Mammary epithelial cell (primary cell): ENCODE measurements at regions of chr12 and their contacts with region 1.

Region 1: GRCh38 chr12:76206039-76206676 is 121.7 kb upstream of the NAP1L1 start:
- DNase-seq: no peak
- H3K4me3 ChIP-seq: no peak overlapping the region
- H3K27ac ChIP-seq: no peak overlapping the region
- H3K4me1 ChIP-seq: no peaks in the 10 kb centered on the region
- H3K27me3 ChIP-seq: no peaks in the 10 kb centered on the region
- CTCF ChIP-seq: no peak

Region 2: DNA sequence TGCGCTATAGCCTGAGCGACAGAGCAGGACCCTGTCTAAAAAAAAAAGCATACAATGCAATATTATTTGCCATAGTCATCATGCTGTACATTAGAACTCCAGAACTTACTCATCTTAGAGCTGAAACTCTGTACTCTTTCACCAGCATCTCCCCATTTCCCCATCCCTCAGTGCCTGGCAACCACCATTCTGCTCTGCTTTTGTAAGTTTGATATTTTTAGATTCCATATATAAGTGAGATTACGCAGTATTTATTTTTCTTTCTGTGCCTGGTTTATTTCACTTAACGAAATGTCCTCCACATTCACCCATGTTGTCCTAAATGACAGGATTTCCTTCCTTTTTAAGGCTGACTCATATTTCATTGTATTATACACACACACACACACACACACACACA is 20.2 kb after region 1 on chr12:
- CTCF ChIA-PET with region 1: interaction called, 19 read pairs
- dilution Hi-C with region 1: no loop called
- in situ Hi-C with region 1: no loop called
- intact Hi-C with region 1: no loop called
- DNase-seq: no peak
- H3K4me3 ChIP-seq: no peak overlapping the region
- H3K27ac ChIP-seq: no peak overlapping the region
- H3K4me1 ChIP-seq: no peaks in the 10 kb centered on the region
- H3K27me3 ChIP-seq: no peaks in the 10 kb centered on the region
- CTCF ChIP-seq: no peak